Posterior cingulate gyrus (tissue), 11 donors: ENCODE measurements at regions of chr11 and their contacts with region 1.

Region 1: GRCh38 chr11:33736148-33736809 is at the start of gene CD59:
- DNase-seq: peak; percentile 85 to 99 (median 94)

Region 2: DNA sequence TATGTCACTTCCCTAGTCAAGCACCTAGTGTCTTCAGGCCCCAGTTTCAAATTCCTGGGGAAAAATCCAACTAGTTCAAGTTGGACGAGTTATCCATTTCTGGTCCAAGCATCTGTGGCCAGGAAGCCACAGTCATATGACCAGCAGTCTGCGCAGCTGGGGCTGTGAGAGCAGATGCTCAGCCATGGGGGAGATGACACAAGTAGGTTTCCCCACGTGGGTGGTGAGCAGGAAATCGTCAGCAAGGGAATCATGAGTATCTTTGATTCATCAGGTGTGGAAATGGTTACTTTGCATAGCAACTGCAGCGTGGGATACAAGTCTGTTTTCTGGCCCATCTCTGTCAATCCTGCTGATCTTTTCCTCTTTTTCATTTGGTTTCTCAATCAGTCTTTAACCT is 220.9 kb before region 1 on chr11:
- intact Hi-C with region 1: no loop called
- DNase-seq: peak in 4 of 10 donors; percentile 37 to 89 (median 58)

Region 3: DNA sequence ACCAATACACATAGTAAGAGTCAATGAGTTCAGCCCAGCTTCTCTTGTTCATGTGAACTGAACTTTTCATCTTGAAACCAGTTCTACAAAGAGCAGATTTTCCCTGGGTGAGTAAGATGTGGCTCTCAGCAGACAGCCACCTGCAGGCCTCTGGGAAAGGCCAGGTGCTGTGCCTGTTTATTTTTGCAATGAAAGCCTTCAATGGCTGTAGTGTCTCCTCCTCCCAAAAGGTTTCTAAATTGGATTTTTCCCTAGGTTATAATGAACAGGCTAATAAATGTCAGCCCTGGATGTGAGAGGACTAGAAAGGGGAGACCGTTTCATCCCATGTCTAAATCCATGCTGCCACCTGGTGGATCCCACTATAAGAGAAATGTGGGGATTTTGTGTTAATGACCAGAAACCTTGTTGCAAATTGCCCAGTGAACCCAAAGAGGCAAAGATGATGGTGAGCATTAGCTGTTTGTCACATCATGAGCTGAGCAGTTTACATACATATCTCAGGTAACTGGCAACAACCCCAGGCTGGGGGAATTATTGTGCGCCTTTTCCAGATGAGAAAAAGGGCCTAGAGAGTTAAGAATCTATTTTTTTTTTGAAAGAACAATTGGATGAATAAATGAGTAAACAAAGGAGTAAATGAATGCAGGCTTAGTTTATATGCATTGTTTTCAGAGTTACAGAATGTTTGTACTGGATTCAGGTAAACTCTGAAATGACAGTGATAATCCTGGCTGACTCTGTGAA is 48.4 kb before region 1 on chr11:
- intact Hi-C with region 1: no loop called
- DNase-seq: peak in 4 of 10 donors; percentile 61 to 71 (median 66)

Region 4: DNA sequence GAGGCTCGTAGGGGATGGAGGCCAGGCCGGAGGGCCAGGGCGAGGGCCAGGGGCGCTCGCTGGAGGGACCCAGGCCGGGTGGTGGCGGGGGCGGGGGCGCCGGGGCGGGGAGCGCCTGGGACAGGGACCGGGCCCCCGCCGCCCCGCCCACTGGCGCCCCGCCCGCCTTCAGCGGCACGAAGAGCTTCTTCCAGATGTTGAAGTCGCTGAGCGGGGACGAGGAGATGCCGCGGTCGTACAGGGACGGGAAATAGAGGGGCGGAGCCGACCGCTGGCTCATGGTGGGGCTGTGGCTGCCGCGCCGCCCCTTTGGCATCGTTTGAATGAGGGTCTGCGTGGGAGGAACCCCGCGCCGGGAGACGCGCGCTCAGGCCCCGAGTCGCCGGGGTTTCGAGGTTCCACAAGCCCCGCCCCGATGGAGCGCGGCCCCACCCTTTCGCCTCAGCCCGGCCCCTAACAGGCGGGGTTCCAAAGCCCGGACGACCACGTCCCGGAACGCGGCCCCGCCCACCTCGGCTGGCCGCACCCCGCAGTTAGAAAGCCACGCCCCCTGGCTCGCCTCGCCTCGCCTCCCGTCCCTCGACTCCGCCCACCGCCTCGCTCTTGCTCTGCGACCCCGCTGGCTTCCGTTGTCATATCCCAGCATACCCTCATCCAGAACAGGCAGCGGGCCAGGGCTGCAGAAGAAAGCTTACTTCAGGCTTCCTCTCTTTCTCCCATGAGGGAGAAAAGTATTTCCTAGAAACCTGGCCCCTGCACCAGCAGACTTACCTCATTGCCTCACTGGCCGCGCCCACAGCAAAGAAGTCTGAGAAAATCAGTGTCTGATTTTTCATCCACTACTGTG is 35.6 kb before region 1 on chr11 and contains the start of gene C11orf91:
- intact Hi-C with region 1: loop called (anchors 5 kb)
- DNase-seq: peak; percentile 84 to 99 (median 94)

Region 5: GRCh38 chr11:33773987-33774735 is 37.9 kb after region 1 on chr11 and contains the start of gene FBXO3:
- intact Hi-C with region 1: loop called (anchors 5 kb)
- DNase-seq: peak; percentile 67 to 97 (median 84)